CD8-positive, alpha-beta memory T cell (primary cell): ENCODE measurements at regions of chr10 and their contacts with region 1.

Region 1: GRCh38 chr10:124530215-124530665 is 68.6 kb downstream of the LHPP start:
- DNase-seq: peak; percentile 75 to 89 (median 77)
- H3K4me3 ChIP-seq: no peak overlapping the region
- H3K4me3 Mint-ChIP-seq: peak overlapping the region in 2 of 7 donors; percentile 48 to 81
- H3K27ac ChIP-seq: no peak overlapping the region
- H3K27ac Mint-ChIP-seq: peak overlapping the region in 3 of 8 donors; percentile 38 to 92 (median 68)
- H3K4me1 ChIP-seq: no peaks in the 10 kb centered on the region
- H3K4me1 Mint-ChIP-seq: peaks cover 3 to 5% (median 5%) of the 10 kb centered on the region in 3 donors
- H3K27me3 ChIP-seq: no peaks in the 10 kb centered on the region
- H3K27me3 Mint-ChIP-seq: no peaks in the 10 kb centered on the region

Region 2: DNA sequence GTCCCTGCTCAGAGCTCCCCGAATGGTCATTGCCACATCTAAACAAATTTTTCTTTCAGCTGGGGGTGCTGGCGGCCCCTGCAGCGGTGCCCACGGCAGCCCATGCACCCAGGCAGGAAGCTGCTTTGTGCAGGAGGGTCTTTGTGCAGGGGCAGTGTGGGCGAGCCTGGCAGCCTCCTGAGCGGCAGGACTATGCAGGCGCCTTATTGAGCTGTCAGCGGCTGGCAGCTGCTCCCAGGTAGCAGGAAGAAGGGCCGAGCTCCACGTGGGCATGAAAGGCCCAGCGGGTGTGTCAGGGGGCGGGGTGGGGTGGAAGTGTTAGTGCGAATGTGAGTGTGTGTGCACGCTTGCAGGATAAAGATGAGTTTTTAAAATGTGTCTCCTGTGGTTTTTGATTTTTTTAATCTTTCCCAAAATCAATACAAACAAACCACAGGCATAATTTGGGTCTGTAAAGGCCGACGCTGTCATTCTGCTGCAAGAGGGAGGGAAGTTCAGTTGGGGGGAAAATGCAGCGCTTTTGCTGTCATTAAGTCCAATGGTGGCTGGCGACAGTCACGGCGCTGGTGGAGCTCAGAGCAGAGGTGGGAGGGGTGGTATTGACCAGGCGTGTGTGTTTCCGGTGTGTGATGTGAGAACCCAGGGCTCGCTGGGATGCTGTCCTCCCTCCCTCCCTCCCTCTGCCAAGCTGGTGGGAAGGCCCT is 15.3 kb after region 1 on chr10:
- CTCF ChIA-PET with region 1: interaction called, 11 read pairs
- POLR2A ChIA-PET with region 1: no interaction called
- DNase-seq: no peak
- H3K4me3 ChIP-seq: no peak overlapping the region
- H3K4me3 Mint-ChIP-seq: peak overlapping the region in 5 of 7 donors; percentile 15 to 51 (median 19)
- H3K27ac ChIP-seq: no peak overlapping the region
- H3K27ac Mint-ChIP-seq: peak overlapping the region in 1 of 8 donors; percentile 58
- H3K4me1 ChIP-seq: peaks cover 14% of the 10 kb centered on the region
- H3K4me1 Mint-ChIP-seq: peaks cover 11 to 21% (median 19%) of the 10 kb centered on the region in 3 donors
- H3K27me3 ChIP-seq: no peaks in the 10 kb centered on the region
- H3K27me3 Mint-ChIP-seq: no peaks in the 10 kb centered on the region